ENCODE measurements at regions of chr1 and their contacts with region 1.

Region 1: DNA sequence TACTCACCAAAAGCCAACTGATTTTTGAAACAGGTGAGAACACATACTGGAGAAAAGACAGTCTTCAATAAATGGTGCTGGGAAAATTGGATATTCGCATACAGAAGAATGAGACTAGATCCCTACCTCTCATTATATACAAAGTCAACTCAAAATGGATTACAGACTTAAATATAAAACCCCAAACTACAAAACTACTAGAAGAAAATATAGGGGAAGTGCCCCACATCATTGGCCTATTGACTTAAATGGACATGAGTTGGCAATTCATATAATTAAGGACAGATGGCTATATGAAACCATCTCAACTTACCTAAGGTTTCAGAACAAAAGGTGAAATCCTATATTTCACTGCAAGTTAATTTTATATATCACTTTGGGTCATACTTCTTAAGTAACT is 60.1 kb downstream of the C4BPA start:
- DNase-seq: no peak
- ATAC-seq: no peak
- H3K4me3 ChIP-seq: no peak overlapping the region
- H3K27ac ChIP-seq: no peak overlapping the region
- H3K4me1 ChIP-seq: no peaks in the 10 kb centered on the region
- H3K27me3 ChIP-seq: no peaks in the 10 kb centered on the region
- CTCF ChIP-seq: no peak

Region 2: DNA sequence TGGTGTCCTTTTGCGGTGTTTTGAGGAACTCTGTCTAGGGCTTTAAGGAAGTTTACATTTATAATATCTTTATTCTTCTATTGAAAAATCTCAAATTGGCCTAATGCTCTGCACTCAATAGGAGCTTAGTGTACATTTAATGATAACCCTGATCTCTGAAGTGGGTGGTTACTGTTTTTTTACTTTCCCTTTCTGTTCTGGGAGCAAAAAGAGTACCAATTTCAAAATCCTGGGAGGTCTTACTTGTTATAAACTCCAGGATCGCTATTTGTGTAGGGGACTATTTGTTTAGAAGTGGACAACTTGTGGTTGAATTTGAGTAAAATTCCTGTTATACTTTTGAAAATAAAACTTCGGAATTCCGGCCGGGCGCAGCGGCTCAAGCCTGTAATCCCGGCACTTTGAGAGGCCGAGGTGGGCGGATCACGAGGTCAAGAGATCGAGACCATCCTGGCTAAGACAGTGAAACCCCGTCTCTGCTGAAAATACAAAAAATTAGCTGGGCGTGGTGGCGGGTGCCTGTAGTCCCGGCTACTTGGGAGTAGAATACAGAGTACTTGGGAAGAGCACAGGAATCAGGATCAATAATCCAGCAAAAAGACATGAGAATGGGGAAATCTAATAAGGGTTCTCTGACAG is 74.3 kb before region 1 on chr1:
- CTCF ChIA-PET with region 1: no interaction called
- POLR2A ChIA-PET with region 1: no interaction called
- intact Hi-C with region 1: loop called (anchors 5 kb)
- DNase-seq: no peak
- ATAC-seq: no peak
- H3K4me3 ChIP-seq: no peak overlapping the region
- H3K27ac ChIP-seq: no peak overlapping the region
- H3K4me1 ChIP-seq: no peaks in the 10 kb centered on the region
- H3K27me3 ChIP-seq: 0 out of 2 replicates have a peak, but pooled peaks cover 12% of the 10 kb centered on the region
- CTCF ChIP-seq: no peak